ENCODE measurements at regions of chr19 and their contacts with region 1.

Region 1: GRCh38 chr19:19145684-19146608 is 7.7 kb upstream of the TMEM161A start:
- DNase-seq: no peak
- ATAC-seq: peak; percentile 86
- H3K4me3 ChIP-seq: no peak overlapping the region
- H3K27ac ChIP-seq: no peak overlapping the region
- H3K4me1 ChIP-seq: no peaks in the 10 kb centered on the region
- H3K27me3 ChIP-seq: no peaks in the 10 kb centered on the region
- CTCF ChIP-seq: peak; percentile 94

Region 2: GRCh38 chr19:18440415-18440877 is 705.5 kb before region 1 on chr19:
- CTCF ChIA-PET with region 1: no interaction called
- POLR2A ChIA-PET with region 1: interaction called, 12 read pairs
- in situ Hi-C with region 1: no loop called
- intact Hi-C with region 1: no loop called
- DNase-seq: no peak
- ATAC-seq: peak; percentile 35
- H3K4me3 ChIP-seq: no peak overlapping the region
- H3K27ac ChIP-seq: peak overlapping the region; percentile 88
- H3K4me1 ChIP-seq: peaks cover 34% of the 10 kb centered on the region
- H3K27me3 ChIP-seq: no peaks in the 10 kb centered on the region
- CTCF ChIP-seq: peak; percentile 78

Region 3: DNA sequence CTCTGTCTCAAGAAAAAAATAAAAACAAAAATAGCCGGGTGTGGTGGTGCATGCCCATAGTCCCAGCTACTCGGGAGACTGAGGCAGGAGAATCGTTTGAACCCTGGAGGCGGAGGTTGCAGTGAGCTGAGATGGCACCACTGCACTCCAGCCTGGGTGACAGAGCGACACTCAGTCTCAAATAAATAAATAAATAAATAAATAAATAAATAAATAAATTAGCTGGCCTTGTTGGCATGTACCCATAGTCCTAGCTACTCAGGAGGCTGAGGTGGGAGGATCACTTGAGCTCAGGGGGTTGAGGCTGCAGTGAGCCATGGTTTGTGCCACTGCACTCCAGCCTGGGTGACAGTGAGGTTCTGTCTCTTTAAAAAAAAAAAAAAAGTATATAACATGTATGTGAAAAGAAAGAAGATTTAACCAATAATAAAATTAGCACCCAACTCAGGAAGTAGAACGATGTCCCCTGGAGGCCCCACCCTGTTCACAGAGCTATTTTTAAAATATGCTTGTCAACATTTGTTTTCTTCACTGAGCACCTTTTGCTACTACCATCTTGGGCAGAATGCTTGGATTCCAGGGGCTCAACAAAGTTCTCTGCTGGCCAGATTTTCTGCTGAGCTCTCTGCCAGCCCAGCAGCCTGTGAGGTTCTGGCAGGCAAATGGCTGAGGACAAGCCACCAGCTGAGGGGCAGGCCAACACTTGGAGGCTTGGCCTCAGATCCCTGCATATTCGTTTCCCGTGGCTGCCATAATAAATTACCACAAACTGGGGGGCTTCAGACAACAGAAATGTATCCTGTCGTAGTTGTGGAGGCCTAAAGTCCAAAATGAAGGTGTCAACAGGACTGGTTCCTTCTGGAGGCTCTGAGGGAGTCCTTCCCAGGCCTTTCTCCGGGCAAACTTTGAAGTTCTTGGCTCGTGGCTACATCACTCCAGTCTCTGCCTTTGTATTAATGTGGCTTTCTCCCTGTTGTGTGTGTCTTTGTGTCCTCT is 77.0 kb before region 1 on chr19:
- CTCF ChIA-PET with region 1: no interaction called
- POLR2A ChIA-PET with region 1: no interaction called
- in situ Hi-C with region 1: no loop called
- intact Hi-C with region 1: no loop called
- DNase-seq: no peak
- ATAC-seq: no peak
- H3K4me3 ChIP-seq: no peak overlapping the region
- H3K27ac ChIP-seq: no peak overlapping the region
- H3K4me1 ChIP-seq: peaks cover 6% of the 10 kb centered on the region
- H3K27me3 ChIP-seq: no peaks in the 10 kb centered on the region
- CTCF ChIP-seq: no peak

Region 4: DNA sequence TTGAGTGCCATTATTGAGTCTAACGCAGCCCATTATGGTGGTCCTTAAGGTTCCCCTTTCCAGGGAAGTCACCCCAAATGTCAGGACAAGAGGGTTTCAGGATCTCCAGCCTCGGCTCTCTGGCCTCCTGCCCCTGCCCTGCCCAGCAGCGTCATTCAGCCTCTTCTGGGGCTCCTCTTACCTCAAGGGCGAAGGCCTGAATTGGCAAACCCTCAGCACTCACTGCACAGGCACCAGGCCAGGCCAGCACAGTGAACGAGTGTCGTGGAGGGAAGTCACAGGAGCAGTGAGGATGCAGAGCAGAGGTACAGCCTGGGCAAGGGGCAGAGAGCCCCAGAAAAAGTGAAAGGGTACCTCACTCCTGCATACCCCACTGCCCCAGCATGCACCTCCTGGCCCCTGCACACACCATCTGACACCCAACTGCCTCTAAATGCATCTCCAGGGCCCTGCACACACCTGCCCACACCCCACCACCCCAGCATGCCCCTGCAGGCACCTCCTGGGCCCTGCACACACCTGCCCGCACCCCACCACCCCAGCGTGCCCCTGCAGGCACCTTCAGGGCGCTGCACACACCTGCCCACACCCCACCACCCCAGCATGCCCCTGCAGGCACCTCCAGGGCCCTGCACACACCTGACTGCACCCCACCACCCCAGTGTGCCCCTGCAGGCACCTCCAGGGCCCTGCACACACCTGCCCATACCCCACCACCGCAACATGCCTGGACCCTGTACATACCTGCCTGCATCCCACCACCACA is 62.4 kb before region 1 on chr19:
- CTCF ChIA-PET with region 1: no interaction called
- POLR2A ChIA-PET with region 1: no interaction called
- in situ Hi-C with region 1: no loop called
- intact Hi-C with region 1: no loop called
- DNase-seq: no peak
- ATAC-seq: no peak
- H3K4me3 ChIP-seq: no peak overlapping the region
- H3K27ac ChIP-seq: no peak overlapping the region
- H3K4me1 ChIP-seq: no peaks in the 10 kb centered on the region
- H3K27me3 ChIP-seq: no peaks in the 10 kb centered on the region
- CTCF ChIP-seq: no peak

Region 5: DNA sequence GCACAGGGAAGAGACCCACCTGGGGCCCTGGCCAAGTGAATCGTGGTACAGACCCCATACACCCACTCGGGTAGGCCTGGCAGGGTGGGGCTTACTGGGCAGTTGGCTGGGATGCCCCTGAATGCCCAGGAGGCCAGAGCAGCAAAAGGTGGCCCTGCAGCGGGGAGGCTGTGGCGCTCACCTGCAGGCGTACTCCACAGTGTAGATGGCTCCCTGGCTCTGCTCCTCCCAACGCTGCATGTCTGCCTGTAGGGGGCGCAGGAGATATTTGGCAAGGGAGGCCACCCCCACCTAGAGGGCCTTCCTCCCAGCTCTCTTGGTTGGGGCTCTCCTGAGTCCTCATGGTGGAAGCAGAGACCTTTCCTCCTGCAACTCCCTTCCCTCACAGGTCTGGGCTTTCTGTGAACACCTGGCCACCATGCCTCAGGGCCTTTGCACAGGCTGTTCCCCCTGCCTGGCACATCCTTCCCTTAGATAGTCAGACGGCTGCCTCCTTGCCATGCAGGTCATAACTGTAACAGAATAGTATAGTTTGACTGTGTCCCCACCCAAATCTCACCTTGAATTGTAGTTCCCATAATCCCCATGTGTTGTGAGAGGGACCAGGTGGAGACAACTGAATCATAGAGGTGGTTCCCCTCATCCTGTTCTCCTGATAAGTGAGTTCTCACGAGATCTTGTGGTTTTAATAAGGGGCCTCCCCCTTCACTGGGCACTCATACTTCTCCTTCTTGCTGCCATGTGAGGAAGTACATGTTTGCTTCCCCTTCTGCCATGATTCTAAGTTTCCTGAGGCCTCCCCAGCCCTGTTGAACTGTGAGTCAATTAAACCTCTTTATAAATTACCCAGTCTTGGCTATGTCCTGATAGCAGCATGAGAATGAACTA is 40.2 kb after region 1 on chr19:
- CTCF ChIA-PET with region 1: no interaction called
- POLR2A ChIA-PET with region 1: interaction called, 16 read pairs
- in situ Hi-C with region 1: no loop called
- intact Hi-C with region 1: no loop called
- DNase-seq: no peak
- ATAC-seq: peak; percentile 91; the same call in 1 of the 2 replicates
- H3K4me3 ChIP-seq: no peak overlapping the region
- H3K27ac ChIP-seq: no peak overlapping the region
- H3K4me1 ChIP-seq: no peaks in the 10 kb centered on the region
- H3K27me3 ChIP-seq: no peaks in the 10 kb centered on the region
- CTCF ChIP-seq: peak; percentile 83; the same call in 1 of the 2 replicates